Tibial artery (tissue), 4 donors: ENCODE measurements at regions of chr3 and their contacts with region 1.

Region 1: GRCh38 chr3:56251343-56251945 is 216.8 kb downstream of the ERC2 start:
- DNase-seq: no peak
- H3K4me3 ChIP-seq: no peak overlapping the region
- H3K27ac ChIP-seq: no peak overlapping the region
- H3K4me1 ChIP-seq: no peaks in the 10 kb centered on the region
- H3K27me3 ChIP-seq: peaks cover 0 to 4% of the 10 kb centered on the region in 2 donors
- CTCF ChIP-seq: peak; percentile 69 to 74

Region 2: DNA sequence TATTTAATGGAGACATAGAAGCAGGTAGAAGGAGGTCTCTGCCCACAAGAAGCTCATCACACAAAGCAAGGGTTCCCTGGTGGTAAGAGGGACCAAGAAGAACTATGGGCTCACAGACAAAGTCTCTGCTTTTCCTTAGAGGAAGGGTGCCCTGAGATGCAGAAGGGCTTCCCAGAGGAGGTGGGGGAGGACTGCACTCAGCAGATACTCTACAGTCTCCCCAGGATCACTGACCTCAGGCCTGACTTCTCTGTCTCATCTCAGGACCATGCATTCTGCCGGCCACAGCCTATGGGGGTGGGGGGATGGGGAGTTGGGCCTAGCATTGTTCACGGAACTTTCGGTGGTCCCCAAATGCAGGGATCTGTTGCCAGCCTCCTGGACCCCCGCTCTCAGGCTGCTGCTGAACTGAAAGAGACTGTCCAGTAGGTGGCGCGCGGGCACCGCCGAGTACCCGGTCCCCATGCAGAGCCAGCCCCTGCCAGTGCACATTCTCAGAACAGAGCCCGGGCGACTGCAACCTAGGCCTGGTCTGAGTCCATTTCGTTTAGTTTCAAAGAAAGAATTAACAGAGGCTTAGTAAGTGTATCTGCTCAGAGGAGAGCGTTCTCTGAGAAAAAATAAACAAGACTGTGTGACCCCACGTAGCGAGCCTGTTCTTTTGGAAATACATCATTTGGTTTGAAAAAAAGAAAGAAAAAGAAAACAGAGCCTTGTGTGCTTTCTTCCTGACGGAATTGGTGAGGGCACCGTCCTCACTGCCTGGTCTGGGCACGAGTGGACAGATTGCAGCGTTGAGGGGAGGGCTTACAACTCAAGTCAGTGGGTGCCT is 1397.7 kb before region 1 on chr3:
- intact Hi-C with region 1: loop called (anchors 10 kb)
- DNase-seq: peak; percentile 73 to 78
- H3K4me3 ChIP-seq: no peak overlapping the region
- H3K27ac ChIP-seq: no peak overlapping the region
- H3K4me1 ChIP-seq: no peaks in the 10 kb centered on the region
- H3K27me3 ChIP-seq: no peaks in the 10 kb centered on the region
- CTCF ChIP-seq: peak; percentile 69

Region 3: DNA sequence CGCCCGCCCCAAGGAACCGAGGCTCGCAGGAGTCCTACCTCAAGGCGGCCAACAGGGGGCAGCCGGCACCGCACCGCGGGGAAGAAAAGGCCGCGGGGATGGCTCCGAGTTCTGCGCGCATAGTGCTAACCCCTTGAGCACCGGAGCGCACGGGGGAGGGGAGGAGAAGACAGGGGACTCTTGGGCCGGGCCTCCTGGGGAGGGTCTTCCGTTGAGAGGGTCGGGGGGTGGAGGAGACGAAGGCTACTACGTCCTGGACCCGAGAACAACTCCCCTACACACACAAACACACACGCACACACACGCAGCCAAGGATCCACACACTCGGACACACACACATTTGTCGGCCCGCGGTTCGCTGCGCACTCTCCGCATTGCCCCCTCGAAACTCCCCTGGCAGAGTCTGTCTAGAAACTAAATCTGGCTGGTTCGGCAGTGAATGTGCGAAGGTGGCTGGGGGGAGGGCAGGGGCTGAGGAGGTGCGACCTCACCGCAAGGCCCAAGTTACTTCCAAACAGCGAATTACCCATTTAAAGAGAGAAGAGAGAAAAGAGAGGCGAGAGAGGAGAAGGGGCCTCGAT is 766.1 kb before region 1 on chr3:
- intact Hi-C with region 1: loop called (anchors 5 kb)
- DNase-seq: peak in 1 of 2 donors; percentile 75
- H3K4me3 ChIP-seq: peak overlapping the region; percentile 54 to 71
- H3K27ac ChIP-seq: no peak overlapping the region
- H3K4me1 ChIP-seq: peaks cover 0 to 76% (median 55%) of the 10 kb centered on the region in 4 donors
- H3K27me3 ChIP-seq: peaks cover 0 to 97% of the 10 kb centered on the region in 2 donors
- CTCF ChIP-seq: peak; percentile 38 to 87

Region 4: GRCh38 chr3:56443372-56443771 is 191.9 kb after region 1 on chr3:
- intact Hi-C with region 1: no loop called
- DNase-seq: no peak
- H3K4me3 ChIP-seq: no peak overlapping the region
- H3K27ac ChIP-seq: no peak overlapping the region
- H3K4me1 ChIP-seq: no peaks in the 10 kb centered on the region
- H3K27me3 ChIP-seq: peaks cover 0 to 2% of the 10 kb centered on the region in 2 donors
- CTCF ChIP-seq: no peak